Activated B cell treated with CpG ODN at 0.5 μM for 24 hours (primary cell): ENCODE measurements at regions of chr7 and their contacts with region 1.

Region 1: DNA sequence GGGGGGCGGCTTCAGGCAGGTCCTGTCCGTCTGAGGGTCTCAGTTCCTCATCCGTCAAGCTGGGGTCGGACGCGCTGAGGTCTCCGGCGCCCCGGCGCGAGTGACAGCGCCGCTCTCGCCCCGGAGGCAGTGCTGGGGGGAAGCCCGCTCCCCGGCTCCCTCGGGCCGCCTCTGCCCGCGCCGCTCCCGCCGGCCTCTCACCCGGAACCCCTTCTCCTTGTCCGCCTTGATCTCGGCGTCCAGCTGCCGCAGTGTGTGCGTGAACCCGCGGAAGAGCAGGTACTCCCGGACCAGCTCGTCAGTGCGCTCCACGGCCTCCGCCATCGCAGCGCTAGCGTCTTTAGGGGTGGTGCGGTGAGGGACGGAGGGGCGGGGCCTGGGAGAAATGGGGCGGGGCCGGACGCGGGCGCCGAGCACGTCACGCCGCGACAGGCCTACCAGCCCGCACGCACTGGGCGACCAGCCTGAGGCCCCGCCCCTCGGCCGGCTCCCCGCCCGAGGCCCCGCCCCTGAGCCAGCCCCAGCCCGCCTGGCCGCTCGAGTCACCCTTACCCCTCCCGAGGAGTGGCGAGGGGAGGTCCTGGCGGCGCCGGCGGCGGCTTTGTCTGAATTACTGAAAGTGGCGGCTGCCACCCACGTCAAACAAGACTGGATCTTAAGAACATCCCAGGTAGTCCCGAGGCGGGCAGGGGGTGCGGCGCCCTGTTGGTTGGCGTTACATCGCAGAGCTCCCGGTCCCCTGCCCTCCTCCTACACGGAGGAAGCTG is at the start of gene WDR91:
- DNase-seq: peak; percentile 87
- ATAC-seq: peak; percentile 92
- H3K4me3 Mint-ChIP-seq: peak within 1 kb of the TSS; percentile 97
- H3K27ac Mint-ChIP-seq: peak within 1 kb of the TSS; percentile 97
- H3K4me1 Mint-ChIP-seq: peaks cover 40% of the 10 kb centered on the region
- H3K27me3 Mint-ChIP-seq: no peaks in the 10 kb centered on the region
- CTCF ChIP-seq: no peak
- total RNA-seq, gene WDR91: 59.5 and 60.1 TPM in 2 replicates

Region 2: DNA sequence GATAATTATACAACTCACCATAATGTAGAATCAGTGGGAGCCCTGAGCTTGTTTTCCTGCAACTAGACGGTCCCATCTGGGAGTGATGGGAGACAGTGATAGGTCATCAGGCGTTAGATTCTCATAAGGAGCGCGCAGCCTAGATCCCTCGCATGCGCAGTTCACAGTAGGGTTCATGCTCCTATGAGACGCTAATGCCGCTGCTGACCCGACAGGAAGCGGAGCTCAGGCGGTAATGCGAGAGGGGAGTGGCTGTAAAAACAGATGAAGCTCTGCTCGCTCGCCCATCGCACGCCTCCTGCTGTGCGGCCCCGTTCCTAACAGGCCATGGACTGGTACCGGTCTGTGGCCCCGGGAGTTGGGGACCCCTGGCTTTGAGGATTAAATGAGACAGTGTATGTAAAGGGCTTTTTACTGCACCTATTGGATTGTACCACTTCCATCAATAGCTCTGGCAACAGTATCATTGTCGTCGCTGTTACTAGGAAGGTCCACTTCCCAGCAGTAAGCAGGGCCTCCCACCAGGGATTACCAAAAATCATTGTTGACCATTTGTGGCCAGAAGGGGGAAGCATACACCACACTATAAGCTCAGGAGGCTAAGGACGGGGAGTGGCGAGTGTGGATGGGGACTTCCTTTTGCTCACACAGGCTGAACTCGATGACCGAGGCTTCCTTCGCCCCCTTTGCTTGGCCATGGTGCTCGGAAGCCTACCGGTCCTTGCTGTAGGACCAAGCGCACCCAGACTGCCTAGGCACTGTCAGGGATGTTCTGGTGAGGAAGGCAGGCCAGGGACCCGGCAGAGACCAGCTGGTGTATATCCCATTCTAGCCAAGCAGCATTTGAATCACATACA is 778.8 kb before region 1 on chr7:
- CTCF ChIA-PET with region 1: no interaction called
- POLR2A ChIA-PET with region 1: no interaction called
- intact Hi-C with region 1: loop called (anchors 5 kb)
- DNase-seq: peak; percentile 56
- ATAC-seq: peak; percentile 89
- H3K4me3 Mint-ChIP-seq: peak overlapping the region; percentile 82
- H3K27ac Mint-ChIP-seq: peak overlapping the region; percentile 82
- H3K4me1 Mint-ChIP-seq: peaks cover 20% of the 10 kb centered on the region
- H3K27me3 Mint-ChIP-seq: no peaks in the 10 kb centered on the region
- CTCF ChIP-seq: no peak

Region 3: DNA sequence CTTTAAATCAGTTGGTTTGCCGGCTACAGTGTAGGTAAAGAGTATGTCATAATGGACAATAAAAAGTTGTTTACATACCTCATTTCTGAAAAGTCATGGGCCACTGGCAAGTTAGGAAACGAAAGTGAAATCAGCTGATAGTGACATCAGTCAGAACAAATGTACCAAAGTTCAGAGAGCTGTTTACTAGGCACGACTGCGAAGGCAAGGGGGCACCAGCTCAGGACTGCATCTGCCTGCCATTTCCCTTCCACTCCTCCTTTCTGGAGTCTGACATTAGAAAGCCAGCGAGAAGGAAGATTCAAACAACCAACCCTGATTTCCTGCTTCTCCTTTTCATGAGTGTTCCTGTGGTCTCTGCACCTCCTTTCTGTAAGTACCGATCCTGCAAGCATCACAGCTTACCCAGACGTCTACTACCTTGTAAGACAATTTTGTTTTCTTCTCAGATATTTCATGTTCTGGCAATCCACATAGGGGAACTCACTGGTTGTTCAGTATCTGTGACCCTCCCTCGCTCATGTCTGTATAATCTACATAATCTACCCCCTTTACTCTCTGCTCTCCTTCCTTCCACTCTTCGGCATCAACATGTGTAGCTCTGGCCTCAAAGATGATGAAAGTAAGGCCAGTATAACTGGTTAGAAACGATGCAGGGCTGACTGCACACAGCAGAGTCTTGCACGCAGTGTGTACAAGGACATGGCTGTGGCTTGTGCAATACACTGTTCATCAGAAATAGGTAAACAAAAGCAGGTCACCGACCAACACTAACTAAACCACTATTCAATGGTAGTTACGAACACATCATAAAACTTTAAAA is 63.3 kb before region 1 on chr7 and contains the start of gene TMEM140:
- CTCF ChIA-PET with region 1: interaction called, 3 read pairs
- POLR2A ChIA-PET with region 1: interaction called, 16 read pairs
- intact Hi-C with region 1: loop called (anchors 1 kb)
- DNase-seq: no peak
- ATAC-seq: peak; percentile 72
- H3K4me3 Mint-ChIP-seq: peak within 1 kb of the TSS; percentile 83
- H3K27ac Mint-ChIP-seq: peak within 1 kb of the TSS; percentile 93
- H3K4me1 Mint-ChIP-seq: peaks cover 73% of the 10 kb centered on the region
- H3K27me3 Mint-ChIP-seq: no peaks in the 10 kb centered on the region
- CTCF ChIP-seq: no peak
- total RNA-seq, gene TMEM140: 18.6 and 20.9 TPM in 2 replicates

Region 4: GRCh38 chr7:135197343-135197742 is 14.0 kb before region 1 on chr7:
- CTCF ChIA-PET with region 1: no interaction called
- POLR2A ChIA-PET with region 1: no interaction called
- intact Hi-C with region 1: no loop called
- DNase-seq: no peak
- ATAC-seq: no peak
- H3K4me3 Mint-ChIP-seq: no peak overlapping the region
- H3K27ac Mint-ChIP-seq: no peak overlapping the region
- H3K4me1 Mint-ChIP-seq: no peaks in the 10 kb centered on the region
- H3K27me3 Mint-ChIP-seq: no peaks in the 10 kb centered on the region
- CTCF ChIP-seq: no peak

Region 5: GRCh38 chr7:135246191-135246825 is 34.9 kb after region 1 on chr7:
- CTCF ChIA-PET with region 1: no interaction called
- POLR2A ChIA-PET with region 1: no interaction called
- intact Hi-C with region 1: no loop called
- DNase-seq: no peak
- ATAC-seq: no peak
- H3K4me3 Mint-ChIP-seq: no peak overlapping the region
- H3K27ac Mint-ChIP-seq: no peak overlapping the region
- H3K4me1 Mint-ChIP-seq: no peaks in the 10 kb centered on the region
- H3K27me3 Mint-ChIP-seq: no peaks in the 10 kb centered on the region
- CTCF ChIP-seq: no peak

Region 6: GRCh38 chr7:135274495-135275268 is 63.3 kb after region 1 on chr7:
- CTCF ChIA-PET with region 1: interaction called, 5 read pairs
- POLR2A ChIA-PET with region 1: no interaction called
- intact Hi-C with region 1: loop called (anchors 2 kb)
- DNase-seq: peak; percentile 49
- ATAC-seq: peak; percentile 96
- H3K4me3 Mint-ChIP-seq: no peak overlapping the region
- H3K27ac Mint-ChIP-seq: no peak overlapping the region
- H3K4me1 Mint-ChIP-seq: peaks cover 2% of the 10 kb centered on the region
- H3K27me3 Mint-ChIP-seq: peaks cover 6% of the 10 kb centered on the region
- CTCF ChIP-seq: peak; percentile 88

Region 7: GRCh38 chr7:135558337-135558767 is 347.0 kb after region 1 on chr7:
- CTCF ChIA-PET with region 1: no interaction called
- POLR2A ChIA-PET with region 1: no interaction called
- intact Hi-C with region 1: loop called (anchors 1 kb)
- DNase-seq: peak; percentile 46
- ATAC-seq: peak; percentile 56
- H3K4me3 Mint-ChIP-seq: no peak overlapping the region
- H3K27ac Mint-ChIP-seq: no peak overlapping the region
- H3K4me1 Mint-ChIP-seq: peaks cover 16% of the 10 kb centered on the region
- H3K27me3 Mint-ChIP-seq: no peaks in the 10 kb centered on the region
- CTCF ChIP-seq: peak; percentile 29